CD8-positive, alpha-beta memory T cell (primary cell): ENCODE measurements at regions of chr2 and their contacts with region 1.

Region 1: GRCh38 chr2:46062637-46063412 is 234.4 kb upstream of the EPAS1 start:
- DNase-seq: peak; percentile 40 to 72 (median 48)
- H3K4me3 ChIP-seq: no peak overlapping the region
- H3K4me3 Mint-ChIP-seq: no peak overlapping the region
- H3K27ac ChIP-seq: no peak overlapping the region
- H3K27ac Mint-ChIP-seq: peak overlapping the region in 1 of 8 donors; percentile 82
- H3K4me1 ChIP-seq: no peaks in the 10 kb centered on the region
- H3K4me1 Mint-ChIP-seq: peaks cover 0 to 10% (median 0%) of the 10 kb centered on the region in 3 donors
- H3K27me3 ChIP-seq: no peaks in the 10 kb centered on the region
- H3K27me3 Mint-ChIP-seq: no peaks in the 10 kb centered on the region

Region 2: GRCh38 chr2:46008091-46008870 is 54.5 kb before region 1 on chr2:
- CTCF ChIA-PET with region 1: no interaction called
- POLR2A ChIA-PET with region 1: no interaction called
- DNase-seq: no peak
- H3K4me3 ChIP-seq: no peak overlapping the region
- H3K4me3 Mint-ChIP-seq: no peak overlapping the region
- H3K27ac ChIP-seq: no peak overlapping the region
- H3K27ac Mint-ChIP-seq: no peak overlapping the region
- H3K4me1 ChIP-seq: no peaks in the 10 kb centered on the region
- H3K4me1 Mint-ChIP-seq: no peaks in the 10 kb centered on the region
- H3K27me3 ChIP-seq: no peaks in the 10 kb centered on the region
- H3K27me3 Mint-ChIP-seq: no peaks in the 10 kb centered on the region

Region 3: DNA sequence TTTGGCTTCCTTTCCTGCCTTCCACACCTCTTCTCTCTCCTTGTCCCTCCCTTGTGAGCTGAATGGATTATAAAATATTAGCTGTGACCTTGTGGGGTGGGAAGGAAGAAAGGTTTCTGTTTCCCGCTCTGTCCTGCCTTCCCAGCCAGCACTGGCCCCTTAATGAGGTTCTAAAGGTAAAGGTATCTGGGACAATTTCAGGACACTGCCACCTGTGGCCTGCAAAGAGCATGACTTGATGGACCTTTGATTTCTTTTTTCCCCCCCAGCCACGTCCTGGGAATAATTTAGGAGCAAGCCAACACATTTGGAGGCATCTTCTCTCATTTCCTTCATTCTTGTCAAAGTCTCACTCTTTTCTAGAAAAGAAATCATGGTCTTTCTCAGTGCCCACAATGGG is 12.3 kb before region 1 on chr2:
- CTCF ChIA-PET with region 1: interaction called, 20 read pairs
- POLR2A ChIA-PET with region 1: no interaction called
- DNase-seq: no peak
- H3K4me3 ChIP-seq: no peak overlapping the region
- H3K4me3 Mint-ChIP-seq: no peak overlapping the region
- H3K27ac ChIP-seq: no peak overlapping the region
- H3K27ac Mint-ChIP-seq: no peak overlapping the region
- H3K4me1 ChIP-seq: no peaks in the 10 kb centered on the region
- H3K4me1 Mint-ChIP-seq: no peaks in the 10 kb centered on the region
- H3K27me3 ChIP-seq: no peaks in the 10 kb centered on the region
- H3K27me3 Mint-ChIP-seq: no peaks in the 10 kb centered on the region

Region 4: GRCh38 chr2:46364797-46365457 is 302.1 kb after region 1 on chr2:
- CTCF ChIA-PET with region 1: interaction called, 11 read pairs
- POLR2A ChIA-PET with region 1: no interaction called
- DNase-seq: peak in 2 of 5 donors; percentile 31 to 45
- H3K4me3 ChIP-seq: no peak overlapping the region
- H3K4me3 Mint-ChIP-seq: no peak overlapping the region
- H3K27ac ChIP-seq: no peak overlapping the region
- H3K27ac Mint-ChIP-seq: peak overlapping the region in 1 of 8 donors; percentile 58
- H3K4me1 ChIP-seq: peaks cover 17% of the 10 kb centered on the region
- H3K4me1 Mint-ChIP-seq: peaks cover 39 to 50% (median 42%) of the 10 kb centered on the region in 3 donors
- H3K27me3 ChIP-seq: no peaks in the 10 kb centered on the region
- H3K27me3 Mint-ChIP-seq: no peaks in the 10 kb centered on the region

Region 5: DNA sequence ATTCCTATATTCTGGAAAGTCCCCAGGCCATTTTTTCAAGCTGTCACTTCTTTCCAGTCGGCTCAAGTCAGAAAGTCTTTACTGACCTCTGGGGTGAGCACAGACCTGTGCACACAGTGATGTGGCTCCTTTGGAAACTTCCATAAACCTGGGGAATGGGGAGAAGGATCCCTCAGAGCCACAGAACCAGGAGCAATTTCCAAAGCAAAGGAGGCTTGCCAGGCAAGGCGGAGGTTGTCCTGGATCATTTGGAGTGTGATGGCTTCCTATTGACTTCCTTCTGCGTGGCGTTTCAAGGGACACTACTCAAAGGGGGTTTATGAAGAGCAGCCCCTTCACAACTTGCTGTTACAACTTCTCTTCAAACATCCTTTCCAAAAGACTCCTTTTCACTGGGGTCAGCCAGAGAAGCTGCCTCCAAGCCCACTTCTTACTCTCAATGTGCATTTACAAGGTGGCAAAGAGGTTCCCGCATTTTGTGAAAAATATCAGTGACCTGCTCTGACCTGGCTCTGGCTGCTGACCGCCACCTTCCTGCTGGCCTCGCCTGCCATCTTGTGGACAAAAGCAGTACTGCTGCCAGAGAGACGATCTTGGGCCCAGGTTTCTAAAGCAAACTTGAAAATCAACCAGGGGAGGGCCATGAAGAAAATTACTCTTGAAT is 398.3 kb after region 1 on chr2:
- CTCF ChIA-PET with region 1: interaction called, 22 read pairs
- POLR2A ChIA-PET with region 1: no interaction called
- DNase-seq: peak; percentile 57 to 78 (median 65)
- H3K4me3 ChIP-seq: no peak overlapping the region
- H3K4me3 Mint-ChIP-seq: no peak overlapping the region
- H3K27ac ChIP-seq: no peak overlapping the region
- H3K27ac Mint-ChIP-seq: peak overlapping the region in 3 of 8 donors; percentile 44 to 57 (median 47)
- H3K4me1 ChIP-seq: peaks cover 5% of the 10 kb centered on the region
- H3K4me1 Mint-ChIP-seq: peaks cover 10 to 13% (median 12%) of the 10 kb centered on the region in 3 donors
- H3K27me3 ChIP-seq: no peaks in the 10 kb centered on the region
- H3K27me3 Mint-ChIP-seq: peaks cover 0 to 1% of the 10 kb centered on the region in 2 donors